SK-N-SH (cell line): ENCODE measurements at regions of chr13 and their contacts with region 1.

Region 1: GRCh38 chr13:26186118-26186870 is 35.8 kb downstream of the RNF6 start:
- DNase-seq: peak; percentile 90
- H3K4me3 ChIP-seq: peak overlapping the region; percentile 60 to 63
- H3K27ac ChIP-seq: peak overlapping the region; percentile 12 to 25; a peak in 2 of 4 replicates
- H3K4me1 ChIP-seq: peaks cover 0 to 6% of the 10 kb centered on the region in 2 experiments; a peak in 1 of 4 replicates
- H3K27me3 ChIP-seq: no peaks in the 10 kb centered on the region
- CTCF ChIP-seq: peak; percentile 62
- EP300 ChIP-seq: no peak
- RAD21 ChIP-seq: peak; percentile 37; the same call in 1 of the 2 replicates

Region 2: GRCh38 chr13:26202365-26202972 is 16.2 kb after region 1 on chr13:
- CTCF ChIA-PET with region 1: interaction called, 10 read pairs
- POLR2A ChIA-PET with region 1: no interaction called
- DNase-seq: no peak
- H3K4me3 ChIP-seq: no peak overlapping the region
- H3K27ac ChIP-seq: peak overlapping the region in 1 of 2 experiments; percentile 64; a peak in 3 of 4 replicates
- H3K4me1 ChIP-seq: peaks cover 0 to 18% of the 10 kb centered on the region in 2 experiments; a peak in 1 of 4 replicates
- H3K27me3 ChIP-seq: no peaks in the 10 kb centered on the region
- CTCF ChIP-seq: no peak
- EP300 ChIP-seq: no peak; a peak in 1 of 4 replicates
- RAD21 ChIP-seq: no peak

Region 3: GRCh38 chr13:26216042-26216441 is 29.7 kb after region 1 on chr13:
- CTCF ChIA-PET with region 1: interaction called, 11 read pairs
- POLR2A ChIA-PET with region 1: interaction called, 4 read pairs
- DNase-seq: no peak
- H3K4me3 ChIP-seq: no peak overlapping the region
- H3K27ac ChIP-seq: no peak overlapping the region
- H3K4me1 ChIP-seq: peaks cover 0 to 8% of the 10 kb centered on the region in 2 experiments; a peak in 2 of 4 replicates
- H3K27me3 ChIP-seq: no peaks in the 10 kb centered on the region
- CTCF ChIP-seq: no peak
- EP300 ChIP-seq: no peak
- RAD21 ChIP-seq: no peak

Region 4: DNA sequence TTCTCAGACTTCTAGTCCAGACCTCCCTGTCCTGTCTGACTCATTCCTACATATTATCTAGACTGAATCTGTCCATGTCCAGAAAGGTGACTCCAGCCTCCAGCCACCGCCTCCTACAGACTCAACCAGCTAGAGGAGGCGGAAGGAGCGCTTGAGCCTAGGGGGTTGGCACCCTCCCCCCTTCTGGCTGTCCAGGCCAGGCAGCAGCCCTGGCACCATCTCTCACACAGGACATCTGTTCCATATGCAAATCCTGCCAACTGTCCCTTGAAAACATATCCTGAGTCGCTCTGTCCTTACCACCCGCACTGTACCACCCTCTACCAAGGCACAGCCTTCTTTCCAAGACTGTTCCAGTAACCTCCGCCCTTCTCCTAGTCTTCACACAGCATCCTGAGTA is 220.5 kb after region 1 on chr13:
- CTCF ChIA-PET with region 1: no interaction called
- POLR2A ChIA-PET with region 1: no interaction called
- DNase-seq: no peak
- H3K4me3 ChIP-seq: no peak overlapping the region
- H3K27ac ChIP-seq: no peak overlapping the region
- H3K4me1 ChIP-seq: no peaks in the 10 kb centered on the region; a peak in 1 of 4 replicates
- H3K27me3 ChIP-seq: no peaks in the 10 kb centered on the region
- CTCF ChIP-seq: no peak
- EP300 ChIP-seq: no peak
- RAD21 ChIP-seq: no peak

Region 5: GRCh38 chr13:26482451-26483197 is 296.3 kb after region 1 on chr13:
- CTCF ChIA-PET with region 1: interaction called, 36 read pairs
- POLR2A ChIA-PET with region 1: no interaction called
- DNase-seq: peak; percentile 81
- H3K4me3 ChIP-seq: peak overlapping the region in 1 of 2 experiments; percentile 7; a peak in 2 of 4 replicates
- H3K27ac ChIP-seq: no peak overlapping the region
- H3K4me1 ChIP-seq: peaks cover 0 to 2% of the 10 kb centered on the region in 2 experiments; a peak in 1 of 4 replicates
- H3K27me3 ChIP-seq: no peaks in the 10 kb centered on the region
- CTCF ChIP-seq: peak; percentile 93
- EP300 ChIP-seq: no peak
- RAD21 ChIP-seq: peak; percentile 73

Region 6: DNA sequence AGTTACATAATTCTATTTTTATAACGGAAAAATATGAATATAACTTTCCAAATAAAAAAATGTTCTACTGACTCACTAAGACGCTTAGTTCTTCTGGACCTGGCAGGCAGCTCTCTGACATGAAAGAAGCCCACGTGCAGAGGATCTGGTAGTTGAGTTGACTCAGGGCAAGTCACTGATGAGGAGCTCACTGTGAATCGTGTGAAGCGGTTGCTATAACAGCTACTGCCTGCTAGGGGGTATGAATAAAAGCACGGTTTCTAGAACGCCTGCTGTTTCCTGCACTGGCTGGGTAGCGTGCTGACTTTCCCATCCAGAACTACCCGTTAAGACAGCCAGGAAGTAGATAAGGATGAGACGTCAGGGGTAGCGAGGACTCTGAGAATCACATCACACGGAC is 316.5 kb after region 1 on chr13:
- CTCF ChIA-PET with region 1: interaction called, 105 read pairs
- POLR2A ChIA-PET with region 1: no interaction called
- DNase-seq: no peak
- H3K4me3 ChIP-seq: no peak overlapping the region
- H3K27ac ChIP-seq: no peak overlapping the region
- H3K4me1 ChIP-seq: peaks cover 10 to 20% of the 10 kb centered on the region in 2 experiments; a peak in 3 of 4 replicates
- H3K27me3 ChIP-seq: no peaks in the 10 kb centered on the region
- CTCF ChIP-seq: no peak
- EP300 ChIP-seq: no peak
- RAD21 ChIP-seq: no peak

Region 7: GRCh38 chr13:26601669-26602068 is 415.4 kb after region 1 on chr13:
- CTCF ChIA-PET with region 1: interaction called, 10 read pairs
- POLR2A ChIA-PET with region 1: no interaction called
- DNase-seq: peak; percentile 53
- H3K4me3 ChIP-seq: no peak overlapping the region
- H3K27ac ChIP-seq: peak overlapping the region; percentile 10 to 74; a peak in 3 of 4 replicates
- H3K4me1 ChIP-seq: peaks cover 12 to 32% of the 10 kb centered on the region in 2 experiments; a peak in 3 of 4 replicates
- H3K27me3 ChIP-seq: no peaks in the 10 kb centered on the region
- CTCF ChIP-seq: peak; percentile 29
- EP300 ChIP-seq: peak; percentile 61 to 63; a peak in 3 of 4 replicates
- RAD21 ChIP-seq: peak; percentile 61